Activated CD8-positive, alpha-beta T cell treated with anti-CD3 and anti-CD28 coated beads, Interleukin-2, amount 10 ng/mL, durations not matched to agents 7 days and 5 days (primary cell): ENCODE measurements at regions of chr1 and their contacts with region 1.

Region 1: DNA sequence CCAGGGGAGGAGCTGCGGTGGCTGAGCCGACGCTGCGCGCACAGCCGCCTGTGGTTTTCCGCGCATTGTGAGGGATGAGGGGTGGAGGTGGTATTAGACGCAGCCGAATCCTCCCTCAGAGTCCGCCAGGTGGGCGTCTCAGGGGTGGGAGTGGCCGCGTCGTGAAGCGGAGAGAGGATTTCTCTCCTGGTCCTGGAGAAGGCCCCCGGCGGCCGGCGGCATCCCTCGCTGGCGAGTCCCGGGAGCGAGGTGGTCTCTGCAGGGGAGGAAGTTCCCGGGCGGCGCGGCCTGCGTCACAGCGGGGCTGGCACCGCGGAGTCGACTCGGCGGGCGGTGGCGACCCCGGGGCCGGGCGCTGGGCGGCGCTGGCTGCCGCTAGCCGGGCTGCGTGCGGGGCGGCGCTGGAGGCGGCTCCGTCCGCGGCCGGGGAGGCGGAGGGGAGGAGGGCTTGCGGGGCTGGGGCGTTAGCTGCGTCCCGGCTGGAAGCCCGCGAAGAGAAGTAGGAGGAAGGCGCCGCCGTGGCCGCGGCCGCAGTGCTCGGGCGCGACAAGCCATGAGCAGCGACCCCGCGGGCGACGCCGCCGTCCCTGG is at the start of gene LRRC8C:
- DNase-seq: peak; percentile 89
- ATAC-seq: peak; percentile 81
- H3K4me3 Mint-ChIP-seq: peak within 1 kb of the TSS; percentile 89
- H3K27ac Mint-ChIP-seq: peak within 1 kb of the TSS; percentile 95
- H3K4me1 Mint-ChIP-seq: peaks cover 71% of the 10 kb centered on the region
- H3K27me3 Mint-ChIP-seq: no peaks in the 10 kb centered on the region
- total RNA-seq, gene LRRC8C: 32.9 to 35.0 TPM

Region 2: GRCh38 chr1:89519779-89520358 is 112.9 kb before region 1 on chr1:
- CTCF ChIA-PET with region 1: interaction called, 17 read pairs
- POLR2A ChIA-PET with region 1: interaction called, 4 read pairs
- DNase-seq: peak; percentile 62
- ATAC-seq: peak; percentile 38
- H3K4me3 Mint-ChIP-seq: no peak overlapping the region
- H3K27ac Mint-ChIP-seq: no peak overlapping the region
- H3K4me1 Mint-ChIP-seq: peaks cover 14% of the 10 kb centered on the region
- H3K27me3 Mint-ChIP-seq: no peaks in the 10 kb centered on the region

Region 3: GRCh38 chr1:89615676-89616598 is 16.8 kb before region 1 on chr1:
- CTCF ChIA-PET with region 1: interaction called, 82 read pairs
- POLR2A ChIA-PET with region 1: interaction called, 201 read pairs
- DNase-seq: no peak
- ATAC-seq: no peak
- H3K4me3 Mint-ChIP-seq: no peak overlapping the region
- H3K27ac Mint-ChIP-seq: no peak overlapping the region
- H3K4me1 Mint-ChIP-seq: peaks cover 63% of the 10 kb centered on the region
- H3K27me3 Mint-ChIP-seq: no peaks in the 10 kb centered on the region

Region 4: DNA sequence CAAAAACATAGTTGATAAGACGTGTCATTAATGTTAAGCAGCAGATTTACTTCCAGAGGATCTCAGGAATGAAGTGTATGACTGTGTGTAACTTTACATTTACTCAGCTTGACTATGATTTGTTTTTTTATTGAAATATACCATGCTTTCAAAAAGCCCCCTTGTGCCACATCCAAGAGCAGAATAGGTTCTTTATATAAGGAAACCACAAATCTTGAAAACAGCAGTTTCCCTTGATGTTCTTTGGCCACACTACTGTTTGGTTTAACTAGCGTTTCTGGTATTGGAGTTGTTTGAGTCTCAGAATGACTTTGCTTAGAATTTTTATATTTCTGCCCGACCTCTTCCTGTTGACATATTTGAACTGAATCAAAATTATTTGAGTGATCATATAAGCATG is 25.1 kb after region 1 on chr1:
- CTCF ChIA-PET with region 1: interaction called, 80 read pairs
- POLR2A ChIA-PET with region 1: interaction called, 38 read pairs
- DNase-seq: peak; percentile 59
- ATAC-seq: peak; percentile 84
- H3K4me3 Mint-ChIP-seq: peak overlapping the region; percentile 60
- H3K27ac Mint-ChIP-seq: peak overlapping the region; percentile 79
- H3K4me1 Mint-ChIP-seq: peaks cover 92% of the 10 kb centered on the region
- H3K27me3 Mint-ChIP-seq: no peaks in the 10 kb centered on the region

Region 5: DNA sequence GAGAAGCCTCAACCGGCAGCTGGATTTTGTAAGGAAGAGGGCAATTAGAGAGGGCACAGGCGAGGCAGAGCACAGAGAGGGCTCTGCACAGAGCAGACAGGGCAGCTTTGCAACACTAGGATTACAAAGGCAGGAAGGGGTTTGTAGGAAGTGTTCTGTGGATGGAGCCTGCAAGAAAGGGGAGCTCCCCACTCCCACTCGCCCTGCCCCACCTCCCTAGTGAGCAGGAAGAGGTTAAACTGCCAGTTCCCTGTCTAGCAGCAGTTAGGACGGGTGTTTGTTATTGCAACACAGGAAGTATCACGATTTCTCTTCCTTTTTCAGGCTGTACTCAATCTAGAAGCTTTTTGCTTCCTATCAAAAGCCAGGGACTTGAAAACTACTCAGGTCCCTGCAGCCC is 124.8 kb after region 1 on chr1:
- CTCF ChIA-PET with region 1: interaction called, 220 read pairs
- POLR2A ChIA-PET with region 1: interaction called, 63 read pairs
- DNase-seq: peak; percentile 71
- ATAC-seq: peak; percentile 77
- H3K4me3 Mint-ChIP-seq: peak overlapping the region; percentile 73
- H3K27ac Mint-ChIP-seq: peak overlapping the region; percentile 92
- H3K4me1 Mint-ChIP-seq: peaks cover 89% of the 10 kb centered on the region
- H3K27me3 Mint-ChIP-seq: no peaks in the 10 kb centered on the region

Region 6: GRCh38 chr1:89850844-89851415 is 218.2 kb after region 1 on chr1:
- CTCF ChIA-PET with region 1: no interaction called
- POLR2A ChIA-PET with region 1: no interaction called
- DNase-seq: no peak
- ATAC-seq: no peak
- H3K4me3 Mint-ChIP-seq: no peak overlapping the region
- H3K27ac Mint-ChIP-seq: no peak overlapping the region
- H3K4me1 Mint-ChIP-seq: peaks cover 31% of the 10 kb centered on the region
- H3K27me3 Mint-ChIP-seq: no peaks in the 10 kb centered on the region